ENCODE measurements at regions of chr10 and their contacts with region 1.

Region 1: DNA sequence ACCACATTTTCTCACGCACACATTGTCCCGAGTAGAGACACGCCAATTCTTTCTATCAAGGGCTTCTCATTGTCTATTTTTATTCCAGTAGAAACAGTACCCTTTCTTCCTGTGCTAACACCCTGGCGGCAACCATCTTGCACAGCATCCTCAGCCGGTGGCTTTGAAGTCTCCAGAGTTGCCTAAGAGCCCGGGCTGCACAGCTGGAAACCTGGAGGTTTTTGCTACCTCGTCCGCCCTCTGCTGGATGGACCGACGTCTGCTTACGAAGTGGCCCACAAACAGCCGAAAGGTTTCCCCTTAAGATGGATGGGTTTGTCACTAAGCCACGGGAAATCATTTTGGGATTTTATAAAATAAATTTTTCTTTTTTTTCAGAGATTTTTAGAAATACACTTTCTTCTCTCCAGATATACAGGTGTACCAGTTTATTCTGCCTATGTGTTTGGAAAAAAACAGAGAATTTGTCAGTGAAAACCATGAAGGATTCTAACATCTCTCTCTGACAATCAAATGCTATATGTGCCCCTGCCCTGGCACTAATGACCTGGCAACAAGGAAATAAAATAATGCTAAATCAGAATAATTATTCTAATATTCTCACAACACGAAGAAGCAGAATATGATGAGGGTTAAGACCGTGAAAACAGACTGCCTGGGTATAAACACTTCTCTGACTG is 81.8 kb upstream of the FAM204A start:
- DNase-seq: peak; percentile 77
- ATAC-seq: peak; percentile 98
- H3K4me3 ChIP-seq: no peak overlapping the region
- H3K27ac ChIP-seq: no peak overlapping the region
- H3K4me1 ChIP-seq: no peaks in the 10 kb centered on the region
- H3K27me3 ChIP-seq: peaks cover 31% of the 10 kb centered on the region
- CTCF ChIP-seq: peak; percentile 68

Region 2: GRCh38 chr10:118259288-118259906 is 164.5 kb before region 1 on chr10:
- CTCF ChIA-PET with region 1: no interaction called
- POLR2A ChIA-PET with region 1: no interaction called
- intact Hi-C with region 1: loop called (anchors 10 kb)
- DNase-seq: peak; percentile 12
- ATAC-seq: no peak
- H3K4me3 ChIP-seq: no peak overlapping the region
- H3K27ac ChIP-seq: no peak overlapping the region
- H3K4me1 ChIP-seq: no peaks in the 10 kb centered on the region
- H3K27me3 ChIP-seq: peaks cover 85% of the 10 kb centered on the region
- CTCF ChIP-seq: peak; percentile 71